Naive thymus-derived CD8-positive, alpha-beta T cell (primary cell): ENCODE measurements at regions of chr15 and their contacts with region 1.

Region 1: DNA sequence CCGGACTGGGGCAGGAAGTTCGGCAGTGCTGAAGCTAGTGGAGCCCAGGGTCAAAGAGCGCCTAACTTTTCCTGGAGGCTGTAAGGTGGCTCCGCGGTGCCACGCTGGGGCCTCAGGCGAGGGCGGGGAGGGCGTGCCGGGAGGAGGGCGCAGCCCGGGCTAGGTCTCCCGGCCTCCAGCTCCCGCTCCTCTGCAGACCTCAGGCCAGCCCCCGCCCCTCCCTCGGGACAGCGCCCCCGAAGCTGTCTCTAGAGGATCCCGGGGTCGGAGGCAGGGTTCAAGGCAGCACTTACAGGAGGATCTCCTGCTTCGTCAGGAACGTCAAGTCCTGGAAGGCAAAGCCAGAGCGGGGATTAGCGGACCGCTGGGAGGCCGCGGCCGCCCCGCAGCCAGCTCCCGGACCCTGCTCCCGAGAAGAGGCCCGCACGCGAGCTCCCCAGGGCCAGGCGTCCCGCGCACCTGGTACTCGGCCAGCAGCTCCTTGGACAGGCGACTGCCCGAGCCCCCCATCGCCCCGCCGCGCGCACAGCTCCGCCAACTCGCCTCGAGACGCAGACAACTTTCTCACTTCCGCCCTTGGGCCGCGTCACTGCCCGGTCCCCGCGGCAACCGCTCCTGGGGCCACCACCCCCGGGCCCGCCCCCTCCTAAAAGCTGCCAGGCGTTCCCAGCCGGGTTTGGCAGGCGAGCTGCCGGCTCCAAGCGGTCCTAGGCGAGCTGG is at the start of gene CIB1:
- DNase-seq: peak; percentile 40 to 98 (median 95)
- ATAC-seq: peak; percentile 74 to 78
- H3K4me3 Mint-ChIP-seq: peak within 1 kb of the TSS; percentile 83 to 97 (median 92)
- H3K27ac Mint-ChIP-seq: peak within 1 kb of the TSS; percentile 97 to 100 (median 99)
- H3K4me1 Mint-ChIP-seq: peaks cover 26 to 68% (median 55%) of the 10 kb centered on the region in 4 donors
- H3K27me3 Mint-ChIP-seq: no peaks in the 10 kb centered on the region
- polyA plus RNA-seq, gene CIB1: 232 to 246 (median 232) TPM

Region 2: GRCh38 chr15:90161950-90162361 is 71.6 kb before region 1 on chr15:
- POLR2A ChIA-PET with region 1: interaction called, 11 read pairs
- DNase-seq: no peak
- ATAC-seq: no peak
- H3K4me3 Mint-ChIP-seq: no peak overlapping the region
- H3K27ac Mint-ChIP-seq: no peak overlapping the region
- H3K4me1 Mint-ChIP-seq: peaks cover 3 to 33% (median 9%) of the 10 kb centered on the region in 4 donors
- H3K27me3 Mint-ChIP-seq: peaks cover 0 to 6% (median 2%) of the 10 kb centered on the region in 5 donors

Region 3: DNA sequence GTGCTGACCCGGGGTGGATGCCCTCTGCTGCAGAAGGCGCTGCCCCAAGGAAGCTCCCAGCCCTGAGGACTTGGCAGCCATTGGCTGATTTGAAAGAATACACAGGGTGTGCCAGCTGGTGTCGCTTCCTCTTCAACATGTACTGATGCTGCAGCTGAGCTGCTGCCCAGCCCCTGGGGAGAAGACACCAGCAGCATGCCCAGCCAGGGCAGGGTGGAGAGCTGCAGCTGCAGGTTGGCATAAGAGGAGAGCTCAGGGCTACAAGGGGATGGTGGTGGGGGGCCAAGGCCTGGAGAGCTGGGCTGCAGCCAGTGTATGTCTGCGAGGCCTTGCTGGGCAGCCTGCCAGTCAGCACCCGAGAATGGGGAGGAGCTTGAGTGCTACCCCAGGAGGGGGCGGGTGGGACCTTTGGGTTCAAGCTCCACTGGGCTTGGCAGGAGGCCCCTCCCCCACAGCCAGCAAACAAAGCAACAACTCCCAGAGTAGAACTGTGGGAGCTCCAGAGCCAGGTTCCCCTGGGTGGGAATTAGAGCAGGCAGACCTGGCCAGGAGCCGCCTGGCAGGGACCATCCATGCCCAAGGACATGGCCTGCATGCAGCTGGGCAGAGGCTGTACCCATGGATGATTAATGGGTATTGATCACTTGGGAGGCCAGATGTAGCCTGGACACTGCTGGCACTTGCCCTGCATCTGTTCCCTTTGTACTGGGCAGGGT is 41.6 kb before region 1 on chr15:
- POLR2A ChIA-PET with region 1: interaction called, 14 read pairs
- DNase-seq: peak in 8 of 10 donors; percentile 22 to 76 (median 34)
- ATAC-seq: peak; percentile 84
- H3K4me3 Mint-ChIP-seq: peak overlapping the region; percentile 60 to 86 (median 80)
- H3K27ac Mint-ChIP-seq: peak overlapping the region in 9 of 10 donors; percentile 29 to 89 (median 83)
- H3K4me1 Mint-ChIP-seq: peaks cover 21 to 72% (median 33%) of the 10 kb centered on the region in 4 donors
- H3K27me3 Mint-ChIP-seq: no peaks in the 10 kb centered on the region

Region 4: GRCh38 chr15:90201130-90201949 is 32.2 kb before region 1 on chr15 and contains the start of gene SEMA4B:
- POLR2A ChIA-PET with region 1: interaction called, 84 read pairs
- DNase-seq: peak; percentile 52 to 81 (median 71)
- ATAC-seq: peak; percentile 90 to 93
- H3K4me3 Mint-ChIP-seq: peak within 1 kb of the TSS; percentile 82 to 94 (median 88)
- H3K27ac Mint-ChIP-seq: peak within 1 kb of the TSS; percentile 84 to 92 (median 90)
- H3K4me1 Mint-ChIP-seq: peaks cover 8 to 55% (median 22%) of the 10 kb centered on the region in 4 donors
- H3K27me3 Mint-ChIP-seq: no peaks in the 10 kb centered on the region
- polyA plus RNA-seq, gene SEMA4B: 4.1 to 6.8 (median 5.0) TPM

Region 5: DNA sequence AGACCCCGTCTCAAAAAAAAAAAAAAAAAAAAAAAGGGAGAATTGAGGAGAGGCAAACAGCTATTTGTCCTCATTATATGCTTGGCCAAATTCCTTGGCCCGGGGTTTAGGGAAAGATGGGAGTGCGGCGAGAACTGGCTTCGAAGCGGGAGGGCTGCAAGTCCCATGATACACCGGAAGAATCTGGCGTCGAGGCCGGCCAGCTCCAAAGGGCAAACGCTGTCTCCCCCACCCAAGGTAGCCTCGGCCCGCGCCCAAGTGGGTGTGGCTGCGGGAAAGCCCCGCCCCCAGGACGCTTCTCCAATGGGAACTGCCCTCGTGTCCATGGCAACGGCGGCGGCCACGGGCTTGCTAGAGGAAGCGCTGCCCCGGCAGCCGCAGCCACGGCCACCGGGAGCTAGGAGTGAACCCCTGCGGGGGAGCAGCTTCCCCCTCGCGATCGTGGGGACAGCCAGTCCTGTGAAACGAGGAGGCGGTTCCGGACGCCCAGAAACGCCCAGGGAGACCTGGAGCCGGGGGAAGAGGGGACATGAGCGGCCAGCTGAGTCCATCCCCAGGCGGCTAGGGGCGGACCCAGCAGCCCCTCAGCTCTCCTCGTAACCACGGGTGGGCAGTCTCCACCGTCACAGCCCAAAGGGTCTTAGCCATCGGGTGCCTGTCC is 15.8 kb after region 1 on chr15 and contains the start of gene TTLL13:
- POLR2A ChIA-PET with region 1: interaction called, 14 read pairs
- DNase-seq: peak in 9 of 10 donors; percentile 37 to 85 (median 61)
- ATAC-seq: peak; percentile 84 to 86
- H3K4me3 Mint-ChIP-seq: peak within 1 kb of the TSS; percentile 67 to 83 (median 75)
- H3K27ac Mint-ChIP-seq: peak within 1 kb of the TSS; percentile 26 to 87 (median 79)
- H3K4me1 Mint-ChIP-seq: peaks cover 11 to 23% (median 19%) of the 10 kb centered on the region in 4 donors
- H3K27me3 Mint-ChIP-seq: no peaks in the 10 kb centered on the region
- polyA plus RNA-seq, gene TTLL13: not detected

Region 6: GRCh38 chr15:90265271-90266060 is 31.9 kb after region 1 on chr15 and contains the start of gene NGRN:
- POLR2A ChIA-PET with region 1: interaction called, 36 read pairs
- DNase-seq: peak; percentile 78 to 97 (median 92)
- ATAC-seq: peak; percentile 87 to 89
- H3K4me3 Mint-ChIP-seq: peak within 1 kb of the TSS; percentile 95 to 98 (median 97)
- H3K27ac Mint-ChIP-seq: peak within 1 kb of the TSS; percentile 96 to 99 (median 99)
- H3K4me1 Mint-ChIP-seq: peaks cover 25 to 56% (median 55%) of the 10 kb centered on the region in 4 donors
- H3K27me3 Mint-ChIP-seq: no peaks in the 10 kb centered on the region
- polyA plus RNA-seq, gene NGRN: 25.9 to 42.9 (median 26.5) TPM